Activated CD4-positive, alpha-beta T cell treated with anti-CD3 and anti-CD28 coated beads for 36 hours (primary cell): ENCODE measurements at regions of chr16 and their contacts with region 1.

Region 1: DNA sequence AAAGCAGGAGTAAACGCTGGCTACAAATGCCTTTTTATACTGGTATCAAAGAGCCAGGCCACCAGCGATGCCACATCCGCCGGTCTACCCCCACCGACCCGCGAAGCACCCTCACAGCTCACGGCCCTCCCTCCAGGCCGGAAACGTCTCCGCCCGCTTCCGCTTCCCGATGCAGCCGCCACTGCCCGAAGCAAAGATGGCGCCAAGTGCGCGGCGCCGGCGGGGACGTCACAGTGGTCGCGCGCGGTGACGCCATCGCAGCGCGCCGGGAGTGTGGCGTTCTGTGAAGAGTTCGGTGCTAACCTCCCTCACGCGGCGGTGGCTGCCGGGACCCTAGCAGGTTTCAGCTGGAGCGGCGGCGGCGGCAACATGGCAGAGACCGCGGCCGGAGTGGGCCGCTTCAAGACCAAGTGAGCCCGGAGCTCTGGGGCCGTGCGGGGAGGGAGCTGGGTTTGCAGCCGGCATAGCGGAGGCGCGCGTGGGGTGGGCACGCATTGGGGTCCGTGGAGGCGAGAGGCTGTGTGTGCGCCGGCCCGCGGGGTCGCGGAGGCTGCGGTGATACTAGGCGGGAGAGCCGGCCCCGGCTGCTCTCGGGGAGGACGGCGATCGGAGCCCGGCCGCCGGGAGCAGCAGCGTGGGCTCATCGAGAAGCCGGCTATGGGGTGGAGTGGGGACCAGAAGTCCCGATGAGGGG is at the start of gene TBL3:
- DNase-seq: peak; percentile 98
- ATAC-seq: peak; percentile 97
- H3K4me3 Mint-ChIP-seq: peak within 1 kb of the TSS; percentile 99
- H3K27ac Mint-ChIP-seq: peak within 1 kb of the TSS; percentile 99
- H3K4me1 Mint-ChIP-seq: peaks cover 16% of the 10 kb centered on the region
- H3K27me3 Mint-ChIP-seq: no peaks in the 10 kb centered on the region
- total RNA-seq, gene TBL3: 47.4 to 48.6 TPM

Region 2: DNA sequence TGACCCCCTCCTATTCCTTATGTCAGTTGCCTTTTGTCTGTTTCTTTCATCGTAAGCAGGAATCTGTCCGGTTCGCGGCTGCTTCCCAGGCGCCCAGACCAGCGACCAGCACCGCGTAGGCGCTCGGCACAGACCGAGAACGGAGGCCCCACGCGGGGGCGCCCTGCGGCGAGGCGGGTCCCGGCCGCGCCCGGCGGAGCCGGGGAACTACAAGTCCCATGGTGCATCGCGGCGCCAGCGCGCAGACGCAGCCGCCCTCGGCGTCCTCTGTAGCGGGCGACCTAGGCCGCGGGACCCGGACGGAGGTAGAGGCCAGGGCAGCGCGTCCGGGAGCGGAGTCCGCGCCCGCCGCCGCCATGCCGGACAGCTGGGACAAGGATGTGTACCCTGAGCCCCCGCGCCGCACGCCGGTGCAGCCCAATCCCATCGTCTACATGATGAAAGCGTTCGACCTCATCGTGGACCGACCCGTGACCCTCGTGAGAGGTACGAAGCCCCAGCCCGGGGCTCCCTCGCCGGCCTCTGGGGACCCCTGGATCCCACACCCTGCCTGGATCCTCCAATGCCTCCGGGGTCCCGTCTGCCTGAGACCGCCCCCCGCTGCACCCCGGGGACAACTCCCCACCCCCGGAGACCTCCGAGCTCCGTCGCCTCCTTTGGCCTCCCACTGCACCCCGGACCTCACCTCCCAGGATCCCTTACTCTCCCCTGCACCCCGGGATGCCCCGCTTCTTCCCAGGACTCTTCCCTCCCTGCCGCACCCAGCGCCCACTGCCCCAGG is 12.5 kb before region 1 on chr16 and contains the start of gene NDUFB10:
- CTCF ChIA-PET with region 1: interaction called, 8 read pairs
- POLR2A ChIA-PET with region 1: interaction called, 14 read pairs
- intact Hi-C with region 1: no loop called
- DNase-seq: peak; percentile 96
- ATAC-seq: peak; percentile 77
- H3K4me3 Mint-ChIP-seq: peak within 1 kb of the TSS; percentile 96
- H3K27ac Mint-ChIP-seq: peak within 1 kb of the TSS; percentile 95
- H3K4me1 Mint-ChIP-seq: peaks cover 34% of the 10 kb centered on the region
- H3K27me3 Mint-ChIP-seq: no peaks in the 10 kb centered on the region
- total RNA-seq, gene NDUFB10: 113 to 118 TPM

Region 3: GRCh38 chr16:1983544-1984346 is 11.8 kb after region 1 on chr16 and contains the start of gene GFER:
- CTCF ChIA-PET with region 1: interaction called, 5 read pairs
- POLR2A ChIA-PET with region 1: no interaction called
- intact Hi-C with region 1: loop called (anchors 1 to 2 kb)
- DNase-seq: peak; percentile 84
- ATAC-seq: peak; percentile 84
- H3K4me3 Mint-ChIP-seq: peak within 1 kb of the TSS; percentile 85
- H3K27ac Mint-ChIP-seq: peak within 1 kb of the TSS; percentile 55
- H3K4me1 Mint-ChIP-seq: peaks cover 16% of the 10 kb centered on the region
- H3K27me3 Mint-ChIP-seq: peaks cover 20% of the 10 kb centered on the region
- total RNA-seq, gene GFER: 25.0 to 25.8 TPM